Gastrocnemius medialis (tissue), 4 donors: ENCODE measurements at regions of chr14 and their contacts with region 1.

Region 1: DNA sequence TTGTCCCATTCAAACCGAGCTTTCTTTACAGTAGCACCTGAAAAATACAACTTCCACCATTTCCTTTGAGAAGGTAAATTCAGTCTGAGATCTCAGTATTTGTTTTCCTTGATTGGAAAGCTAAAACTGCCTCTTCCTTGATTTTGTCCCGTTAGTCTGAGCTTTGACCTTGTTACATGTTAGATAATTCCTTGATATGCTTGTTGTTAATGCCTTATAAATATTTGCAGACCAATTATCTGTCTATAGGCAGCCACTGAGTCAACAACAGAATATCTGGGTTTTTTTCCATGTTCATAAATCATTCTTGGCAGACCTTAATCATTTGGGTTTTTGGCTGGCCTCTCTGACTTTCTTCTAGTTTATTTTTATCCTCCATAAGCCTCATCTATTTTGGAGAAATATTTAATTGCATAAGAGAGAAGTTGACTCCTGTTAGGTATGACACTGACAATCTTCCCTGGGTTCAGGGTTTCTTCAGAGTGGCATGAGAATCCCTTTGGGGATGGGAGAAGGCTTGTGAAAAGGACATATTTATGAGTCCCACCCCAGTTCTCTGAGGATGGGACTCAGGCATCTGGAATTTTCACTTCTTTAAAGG is 299.7 kb downstream of the NRXN3 start:
- DNase-seq: no peak
- ATAC-seq: peak; percentile 85 to 91
- H3K4me3 ChIP-seq: no peak overlapping the region
- H3K27ac ChIP-seq: peak overlapping the region; percentile 24 to 56 (median 38)
- H3K4me1 ChIP-seq: peaks cover 10 to 11% of the 10 kb centered on the region in 2 donors
- H3K27me3 ChIP-seq: no peaks in the 10 kb centered on the region
- CTCF ChIP-seq: no peak
- POLR2A ChIP-seq: no peak

Region 2: DNA sequence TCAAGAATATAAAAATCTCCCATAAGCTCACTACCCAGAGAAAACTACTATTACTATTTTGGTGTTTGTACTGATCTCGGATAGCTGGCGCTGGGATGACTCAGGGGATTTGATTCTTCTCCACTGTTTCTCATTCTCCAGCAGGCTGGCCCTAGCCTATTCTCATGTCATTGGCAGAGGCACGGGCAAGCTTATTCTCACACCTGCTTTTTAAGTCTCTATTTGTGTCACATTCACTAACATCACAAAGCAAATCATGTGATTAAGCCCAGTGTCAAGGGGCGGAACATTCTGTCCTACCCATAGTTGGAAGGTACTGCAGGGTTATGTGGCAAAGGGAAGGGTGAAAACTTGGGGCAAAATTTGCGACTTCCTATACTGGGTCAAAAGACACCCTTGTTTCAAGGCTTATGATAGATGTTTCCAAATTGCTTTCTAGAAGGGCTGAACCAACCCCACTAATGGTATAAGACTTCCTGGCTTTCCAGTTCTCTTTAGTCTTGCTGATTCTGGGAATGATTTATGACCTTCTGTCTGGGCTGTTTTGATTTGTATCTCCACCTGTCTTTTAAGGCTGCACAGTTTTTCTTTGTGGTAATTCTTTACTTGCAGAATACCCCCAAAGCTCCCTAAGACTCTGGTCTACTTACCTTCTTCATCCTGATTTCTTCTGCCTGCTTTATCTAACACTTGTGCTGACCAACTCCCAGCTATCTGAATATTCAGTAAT is 106.8 kb after region 1 on chr14:
- in situ Hi-C with region 1: no loop called
- intact Hi-C with region 1: loop called (anchors 5 kb)
- DNase-seq: peak; percentile 41 to 80
- ATAC-seq: peak; percentile 94 to 96
- H3K4me3 ChIP-seq: no peak overlapping the region
- H3K27ac ChIP-seq: peak overlapping the region; percentile 66 to 79 (median 76)
- H3K4me1 ChIP-seq: peaks cover 6 to 15% of the 10 kb centered on the region in 2 donors
- H3K27me3 ChIP-seq: no peaks in the 10 kb centered on the region
- CTCF ChIP-seq: no peak
- POLR2A ChIP-seq: no peak

Region 3: DNA sequence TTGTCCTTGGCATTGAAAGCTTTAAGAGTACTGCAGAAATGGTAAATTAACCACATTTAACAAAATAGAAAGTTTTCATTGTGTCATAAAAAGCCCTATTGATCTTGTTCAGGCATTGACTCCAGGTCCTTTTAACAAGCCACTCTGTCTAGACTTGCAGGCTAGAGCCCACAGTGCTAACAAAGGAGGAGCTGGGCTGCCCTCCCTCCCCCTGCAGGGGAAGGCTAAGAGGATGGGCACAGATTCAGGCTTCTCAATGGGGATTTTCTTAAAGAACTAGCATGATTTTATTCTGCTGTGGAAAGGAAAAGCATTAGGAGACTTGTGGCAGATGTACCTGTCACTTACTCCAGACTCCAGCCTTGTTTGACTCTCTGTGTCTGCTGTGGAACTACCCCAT is 163.9 kb after region 1 on chr14:
- in situ Hi-C with region 1: no loop called
- intact Hi-C with region 1: no loop called
- DNase-seq: no peak
- ATAC-seq: no peak
- H3K4me3 ChIP-seq: no peak overlapping the region
- H3K27ac ChIP-seq: no peak overlapping the region
- H3K4me1 ChIP-seq: no peaks in the 10 kb centered on the region
- H3K27me3 ChIP-seq: no peaks in the 10 kb centered on the region
- CTCF ChIP-seq: no peak
- POLR2A ChIP-seq: no peak